Activated B cell treated with CpG ODN at 0.5 μM for 24 hours (primary cell): ENCODE measurements at regions of chr6 and their contacts with region 1.

Region 1: DNA sequence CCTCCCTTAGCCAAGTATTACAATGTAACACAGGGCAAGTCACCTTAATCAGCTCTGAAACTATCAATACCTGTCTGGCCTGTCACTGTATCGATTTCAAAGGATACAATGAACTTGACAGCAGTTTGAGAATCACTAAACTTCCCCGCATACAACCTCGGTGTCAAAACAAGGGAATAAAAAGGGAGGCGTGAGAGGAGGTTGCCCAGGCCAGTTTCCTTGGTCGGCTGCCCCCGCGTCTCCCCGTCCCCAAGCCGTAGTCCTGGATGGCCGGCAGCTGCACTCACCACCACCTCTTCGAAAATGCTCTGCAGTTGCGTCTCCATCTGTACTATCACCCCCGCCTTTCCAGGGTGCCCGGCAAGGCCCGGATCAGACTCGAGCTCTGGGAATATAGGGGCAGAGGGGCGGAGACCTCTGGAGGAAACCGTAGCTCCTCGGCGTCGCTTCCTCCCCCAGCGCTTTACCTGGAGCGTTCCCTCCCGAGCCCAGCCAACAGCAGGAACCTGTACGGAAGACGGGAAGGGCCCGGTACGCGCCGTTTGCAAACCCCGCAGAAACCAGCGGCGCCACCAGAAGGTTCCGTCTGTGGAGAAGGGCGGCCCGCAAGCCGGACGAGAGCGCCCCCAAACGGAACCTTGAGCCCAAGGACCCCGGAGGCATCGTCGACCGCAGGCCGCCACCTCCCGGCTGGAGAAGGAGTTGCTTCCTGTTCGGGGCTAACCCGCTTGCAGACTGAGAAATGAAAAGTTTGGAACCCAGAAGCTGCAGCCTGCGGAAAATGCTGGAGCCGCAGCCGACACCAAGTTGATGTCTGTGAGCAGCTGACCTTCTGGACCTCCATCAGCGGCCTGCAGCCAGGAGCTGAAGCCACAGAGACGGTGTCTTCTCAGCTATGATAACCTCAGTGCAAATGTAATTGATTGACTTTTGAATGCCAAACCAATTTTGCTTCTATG is at the start of gene MED23:
- DNase-seq: peak; percentile 98
- ATAC-seq: peak; percentile 95
- H3K4me3 Mint-ChIP-seq: peak within 1 kb of the TSS; percentile 99
- H3K27ac Mint-ChIP-seq: peak within 1 kb of the TSS; percentile 94
- H3K4me1 Mint-ChIP-seq: peaks cover 31% of the 10 kb centered on the region
- H3K27me3 Mint-ChIP-seq: no peaks in the 10 kb centered on the region
- CTCF ChIP-seq: peak; percentile 62
- total RNA-seq, gene MED23: 45.3 and 51.0 TPM in 2 replicates

Region 2: GRCh38 chr6:131135244-131136020 is 492.6 kb before region 1 on chr6 and contains the start of gene AKAP7:
- CTCF ChIA-PET with region 1: no interaction called
- POLR2A ChIA-PET with region 1: no interaction called
- intact Hi-C with region 1: loop called (anchors 5 kb)
- DNase-seq: peak; percentile 68
- ATAC-seq: peak; percentile 76
- H3K4me3 Mint-ChIP-seq: peak within 1 kb of the TSS; percentile 96
- H3K27ac Mint-ChIP-seq: peak within 1 kb of the TSS; percentile 95
- H3K4me1 Mint-ChIP-seq: peaks cover 26% of the 10 kb centered on the region
- H3K27me3 Mint-ChIP-seq: no peaks in the 10 kb centered on the region
- CTCF ChIP-seq: no peak
- total RNA-seq, gene AKAP7: 4.1 TPM in 2 replicates

Region 3: DNA sequence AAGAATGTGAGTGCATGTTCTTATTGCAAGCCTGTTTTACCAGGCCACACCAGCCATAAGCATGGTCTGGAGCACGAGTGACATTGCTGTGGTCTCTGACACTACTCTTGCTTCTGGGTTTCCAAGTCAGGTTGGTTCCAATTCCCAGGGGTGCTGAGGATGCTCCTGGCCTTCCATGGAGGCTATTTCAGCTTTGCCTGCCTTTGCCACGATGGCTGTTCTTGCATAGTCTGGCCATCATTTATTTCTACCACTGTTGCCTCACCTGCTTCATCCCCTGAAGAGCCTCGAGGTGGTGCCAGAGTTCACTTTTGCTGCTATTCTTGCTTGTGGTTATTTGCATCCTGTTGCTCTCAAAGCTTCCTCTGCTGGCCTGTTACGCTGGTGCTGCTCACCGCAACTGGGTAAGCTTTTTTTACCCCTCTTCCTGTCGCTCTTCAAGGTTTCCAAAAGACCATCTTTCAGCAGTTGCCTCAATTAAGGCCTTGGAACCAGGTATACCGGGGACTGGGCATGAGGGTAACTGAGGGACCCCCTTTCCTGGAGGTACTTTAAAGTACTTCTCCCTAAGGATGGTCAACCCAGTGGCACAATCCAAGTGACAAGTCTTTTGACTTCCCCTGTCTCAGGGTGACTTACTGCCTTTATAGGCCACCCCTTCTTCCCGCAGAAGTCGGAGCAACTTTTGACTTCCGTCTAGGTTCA is 428.3 kb before region 1 on chr6:
- CTCF ChIA-PET with region 1: interaction called, 11 read pairs
- POLR2A ChIA-PET with region 1: interaction called, 3 read pairs
- intact Hi-C with region 1: loop called (anchors 1 kb)
- DNase-seq: peak; percentile 44
- ATAC-seq: peak; percentile 100
- H3K4me3 Mint-ChIP-seq: peak overlapping the region; percentile 72
- H3K27ac Mint-ChIP-seq: peak overlapping the region; percentile 87
- H3K4me1 Mint-ChIP-seq: peaks cover 36% of the 10 kb centered on the region
- H3K27me3 Mint-ChIP-seq: no peaks in the 10 kb centered on the region
- CTCF ChIP-seq: peak; percentile 16

Region 4: DNA sequence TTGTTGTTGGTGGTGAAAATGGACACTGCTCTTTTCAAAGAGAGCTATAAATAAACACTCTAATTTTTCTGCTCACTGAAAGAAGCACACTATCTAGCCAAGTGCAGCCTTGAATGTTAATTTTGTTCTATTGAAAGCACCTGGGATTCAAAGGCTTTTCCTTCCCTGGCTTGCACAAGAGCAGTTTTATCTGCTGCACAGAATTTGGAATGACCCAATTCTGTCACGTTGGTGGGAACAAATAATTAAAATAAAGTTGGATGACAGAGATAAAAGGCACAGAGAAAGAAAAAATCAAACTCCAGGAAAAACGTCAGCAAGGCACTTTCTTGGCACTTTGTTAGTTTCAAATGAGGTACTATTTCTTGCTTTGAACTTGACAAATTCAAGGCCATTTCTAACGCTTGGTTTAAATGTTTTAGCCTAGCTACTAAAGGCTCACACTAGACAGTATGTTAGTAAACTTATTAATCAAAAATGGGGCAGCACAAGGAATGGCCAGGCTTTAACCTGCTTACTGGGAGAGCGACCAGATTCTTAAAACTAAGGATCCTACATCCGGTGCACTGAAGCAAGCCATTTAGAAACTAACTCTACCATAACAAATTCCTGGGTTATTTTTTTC is 200.5 kb before region 1 on chr6:
- CTCF ChIA-PET with region 1: no interaction called
- POLR2A ChIA-PET with region 1: no interaction called
- intact Hi-C with region 1: no loop called
- DNase-seq: no peak
- ATAC-seq: no peak
- H3K4me3 Mint-ChIP-seq: no peak overlapping the region
- H3K27ac Mint-ChIP-seq: no peak overlapping the region
- H3K4me1 Mint-ChIP-seq: no peaks in the 10 kb centered on the region
- H3K27me3 Mint-ChIP-seq: peaks cover 8% of the 10 kb centered on the region
- CTCF ChIP-seq: no peak

Region 5: GRCh38 chr6:131640100-131640499 is 12.1 kb after region 1 on chr6:
- CTCF ChIA-PET with region 1: interaction called, 12 read pairs
- POLR2A ChIA-PET with region 1: interaction called, 5 read pairs
- intact Hi-C with region 1: no loop called
- DNase-seq: no peak
- ATAC-seq: no peak
- H3K4me3 Mint-ChIP-seq: no peak overlapping the region
- H3K27ac Mint-ChIP-seq: no peak overlapping the region
- H3K4me1 Mint-ChIP-seq: peaks cover 14% of the 10 kb centered on the region
- H3K27me3 Mint-ChIP-seq: peaks cover 7% of the 10 kb centered on the region
- CTCF ChIP-seq: no peak

Region 6: GRCh38 chr6:131694831-131695426 is 66.9 kb after region 1 on chr6:
- CTCF ChIA-PET with region 1: interaction called, 21 read pairs
- POLR2A ChIA-PET with region 1: interaction called, 6 read pairs
- intact Hi-C with region 1: no loop called
- DNase-seq: no peak
- ATAC-seq: peak; percentile 97
- H3K4me3 Mint-ChIP-seq: no peak overlapping the region
- H3K27ac Mint-ChIP-seq: no peak overlapping the region
- H3K4me1 Mint-ChIP-seq: peaks cover 23% of the 10 kb centered on the region
- H3K27me3 Mint-ChIP-seq: no peaks in the 10 kb centered on the region
- CTCF ChIP-seq: no peak

Region 7: GRCh38 chr6:131807644-131808459 is 179.8 kb after region 1 on chr6 and contains the start of gene ENPP1:
- CTCF ChIA-PET with region 1: no interaction called
- POLR2A ChIA-PET with region 1: no interaction called
- intact Hi-C with region 1: loop called (anchors 1 kb)
- DNase-seq: peak; percentile 45
- ATAC-seq: peak; percentile 79
- H3K4me3 Mint-ChIP-seq: peak within 1 kb of the TSS; percentile 90
- H3K27ac Mint-ChIP-seq: peak within 1 kb of the TSS; percentile 42
- H3K4me1 Mint-ChIP-seq: peaks cover 16% of the 10 kb centered on the region
- H3K27me3 Mint-ChIP-seq: peaks cover 32% of the 10 kb centered on the region
- CTCF ChIP-seq: no peak
- total RNA-seq, gene ENPP1: 0.27 and 1.3 TPM in 2 replicates

Region 8: DNA sequence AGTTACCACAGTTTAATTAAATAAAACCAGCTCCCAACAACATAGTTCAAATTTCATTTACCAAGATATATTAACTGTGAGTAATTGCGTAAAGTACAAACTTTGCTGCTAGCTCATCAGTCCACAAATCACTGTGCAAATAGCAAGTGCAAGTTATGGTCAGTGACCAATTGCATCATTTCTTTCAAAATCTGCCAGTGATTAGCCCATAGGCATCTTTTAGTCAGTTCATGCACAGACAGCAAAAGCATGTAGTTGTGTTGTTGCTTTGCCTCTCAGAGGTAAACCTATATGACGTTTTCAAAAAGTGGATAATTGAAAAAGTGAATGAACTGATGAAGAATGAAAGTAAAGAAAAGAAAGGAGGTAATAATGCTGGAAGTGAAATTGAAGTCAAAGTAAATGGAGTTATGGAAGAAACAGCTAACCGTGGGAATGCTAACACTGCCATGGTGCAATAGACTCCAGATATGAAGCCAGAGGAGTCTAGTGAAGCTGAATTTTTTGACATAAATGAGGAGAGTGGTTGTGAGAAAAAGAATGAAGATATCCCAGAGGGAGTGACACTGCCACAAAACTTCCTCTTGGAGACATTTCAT is 216.3 kb after region 1 on chr6:
- CTCF ChIA-PET with region 1: no interaction called
- POLR2A ChIA-PET with region 1: no interaction called
- intact Hi-C with region 1: no loop called
- DNase-seq: no peak
- ATAC-seq: no peak
- H3K4me3 Mint-ChIP-seq: no peak overlapping the region
- H3K27ac Mint-ChIP-seq: no peak overlapping the region
- H3K4me1 Mint-ChIP-seq: no peaks in the 10 kb centered on the region
- H3K27me3 Mint-ChIP-seq: peaks cover 10% of the 10 kb centered on the region
- CTCF ChIP-seq: no peak